Ascending aorta (tissue), 2 donors: ENCODE measurements at regions of chr10 and their contacts with region 1.

Region 1: DNA sequence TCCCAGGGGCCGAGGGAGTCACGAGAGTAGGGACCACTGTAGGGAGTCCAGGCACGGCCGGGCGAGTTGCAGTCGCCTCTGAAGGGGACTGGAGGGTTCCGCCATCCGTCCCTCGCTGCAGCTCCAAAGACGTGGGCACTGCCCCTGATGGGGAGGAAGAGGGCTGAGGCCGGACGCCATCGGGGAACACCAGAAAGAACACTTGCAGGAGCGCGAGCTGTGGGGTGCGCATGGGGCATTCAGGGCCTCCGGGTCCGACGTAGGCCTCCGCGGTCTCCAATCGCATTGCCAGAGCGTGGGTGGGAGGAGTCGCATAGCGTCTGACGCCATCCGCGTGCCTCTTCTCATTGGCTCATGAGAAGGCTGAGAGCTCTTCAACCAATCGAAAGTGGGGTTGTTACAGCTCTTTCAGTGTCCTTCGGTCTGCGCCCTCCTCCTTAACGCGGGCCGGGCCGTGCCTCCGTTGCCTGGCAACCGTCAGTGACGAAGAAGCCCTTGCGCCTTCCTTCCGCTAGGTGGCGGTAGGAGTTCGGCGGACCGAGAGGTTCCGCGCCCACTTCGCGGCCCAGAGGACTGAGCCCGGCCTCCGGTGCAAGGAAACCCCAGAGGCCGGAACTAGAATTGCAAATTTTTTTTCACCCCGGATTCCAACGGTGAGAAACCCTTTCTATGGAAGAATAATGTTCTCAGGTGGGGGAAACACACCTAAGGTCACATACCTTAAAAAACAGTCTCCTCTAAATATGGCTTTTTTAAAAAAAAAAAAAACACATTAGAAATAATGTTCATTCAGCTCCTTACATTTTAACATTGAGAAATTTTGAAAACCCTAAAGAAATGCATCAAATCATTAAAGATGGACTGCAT is at the start of gene TCTN3:
- DNase-seq: peak; percentile 95 to 99
- H3K4me3 ChIP-seq: peak within 1 kb of the TSS; percentile 78 to 93
- H3K27ac ChIP-seq: peak within 1 kb of the TSS; percentile 59 to 84
- H3K4me1 ChIP-seq: peaks cover 5 to 8% of the 10 kb centered on the region in 2 donors
- H3K27me3 ChIP-seq: no peaks in the 10 kb centered on the region
- CTCF ChIP-seq: peak; percentile 97 to 99 (median 98)
- total RNA-seq, gene TCTN3: 22.1 TPM

Region 2: DNA sequence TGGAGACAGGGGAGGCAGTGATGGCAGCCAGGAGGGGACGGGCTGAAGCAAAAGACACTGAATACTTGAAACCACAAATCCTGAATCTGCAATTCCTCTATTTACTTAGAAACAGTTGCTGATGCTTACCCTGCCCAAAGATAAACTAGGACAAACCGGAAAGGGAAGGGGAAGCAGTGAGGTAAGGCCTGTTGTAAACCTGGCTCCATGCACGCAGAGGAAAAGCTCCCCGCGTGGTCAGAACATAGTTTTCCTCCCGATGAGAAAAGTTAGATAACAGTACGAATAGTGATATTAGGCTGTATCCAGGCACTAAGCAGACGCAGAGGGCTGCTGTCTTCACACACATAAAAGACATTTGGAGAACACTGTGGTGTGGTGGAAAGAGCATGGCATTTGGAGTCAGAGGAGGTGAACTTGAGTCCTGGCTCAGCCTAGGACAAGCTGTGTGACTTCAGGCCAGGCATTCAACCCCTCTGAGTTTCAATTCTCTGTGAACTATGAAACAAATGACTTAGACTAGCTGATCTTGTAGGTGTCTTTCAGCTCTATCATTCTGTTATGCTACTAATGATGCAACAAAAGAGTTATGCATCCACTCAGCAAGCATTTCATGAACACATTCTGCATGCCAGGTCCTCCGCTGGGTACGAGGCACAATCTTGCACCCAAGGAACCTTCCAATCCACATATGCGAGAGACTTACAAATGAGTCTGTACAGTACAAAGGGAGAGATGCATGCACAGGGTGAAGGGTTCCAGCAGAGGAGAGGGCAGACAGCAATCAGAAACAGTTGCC is 213.6 kb before region 1 on chr10:
- intact Hi-C with region 1: no loop called
- DNase-seq: no peak
- H3K4me3 ChIP-seq: peak overlapping the region in 1 of 2 donors; percentile 28
- H3K27ac ChIP-seq: peak overlapping the region; percentile 95 to 96
- H3K4me1 ChIP-seq: peaks cover 45 to 88% of the 10 kb centered on the region in 2 donors
- H3K27me3 ChIP-seq: no peaks in the 10 kb centered on the region
- CTCF ChIP-seq: no peak

Region 3: DNA sequence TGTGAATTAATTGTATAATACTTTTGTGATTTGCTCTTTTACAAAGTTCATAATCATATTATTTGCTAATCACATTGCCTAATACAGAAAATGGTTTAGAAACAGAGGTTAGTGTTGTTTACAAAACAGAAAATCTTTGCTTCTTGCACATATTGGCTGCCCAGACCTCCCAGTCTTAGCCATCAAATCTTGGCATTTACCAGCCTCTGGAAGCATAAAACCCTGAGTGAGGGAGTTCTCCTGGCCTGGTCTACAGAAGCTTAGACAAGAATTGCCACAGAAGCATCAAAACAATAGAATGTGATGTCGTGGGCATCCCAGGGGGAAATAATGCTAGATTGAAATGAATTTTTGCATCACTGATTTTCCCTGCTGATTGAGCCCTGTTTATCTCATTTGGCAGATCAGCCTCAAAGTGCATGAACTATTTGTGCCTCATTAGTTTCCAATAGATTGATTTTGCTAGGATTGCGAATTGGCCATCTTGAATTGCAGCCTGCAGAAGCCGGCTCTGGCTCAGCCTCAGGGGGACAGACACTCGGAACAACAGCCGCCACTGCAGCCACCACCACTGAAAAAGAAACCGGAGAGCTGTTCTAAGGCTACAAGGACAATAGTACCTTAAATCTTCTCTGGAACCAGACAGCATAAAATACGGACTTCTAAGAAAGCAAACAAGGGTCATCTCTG is 121.6 kb before region 1 on chr10:
- intact Hi-C with region 1: no loop called
- DNase-seq: no peak
- H3K4me3 ChIP-seq: no peak overlapping the region
- H3K27ac ChIP-seq: no peak overlapping the region
- H3K4me1 ChIP-seq: peaks cover 0 to 10% of the 10 kb centered on the region in 2 donors
- H3K27me3 ChIP-seq: no peaks in the 10 kb centered on the region
- CTCF ChIP-seq: no peak

Region 4: DNA sequence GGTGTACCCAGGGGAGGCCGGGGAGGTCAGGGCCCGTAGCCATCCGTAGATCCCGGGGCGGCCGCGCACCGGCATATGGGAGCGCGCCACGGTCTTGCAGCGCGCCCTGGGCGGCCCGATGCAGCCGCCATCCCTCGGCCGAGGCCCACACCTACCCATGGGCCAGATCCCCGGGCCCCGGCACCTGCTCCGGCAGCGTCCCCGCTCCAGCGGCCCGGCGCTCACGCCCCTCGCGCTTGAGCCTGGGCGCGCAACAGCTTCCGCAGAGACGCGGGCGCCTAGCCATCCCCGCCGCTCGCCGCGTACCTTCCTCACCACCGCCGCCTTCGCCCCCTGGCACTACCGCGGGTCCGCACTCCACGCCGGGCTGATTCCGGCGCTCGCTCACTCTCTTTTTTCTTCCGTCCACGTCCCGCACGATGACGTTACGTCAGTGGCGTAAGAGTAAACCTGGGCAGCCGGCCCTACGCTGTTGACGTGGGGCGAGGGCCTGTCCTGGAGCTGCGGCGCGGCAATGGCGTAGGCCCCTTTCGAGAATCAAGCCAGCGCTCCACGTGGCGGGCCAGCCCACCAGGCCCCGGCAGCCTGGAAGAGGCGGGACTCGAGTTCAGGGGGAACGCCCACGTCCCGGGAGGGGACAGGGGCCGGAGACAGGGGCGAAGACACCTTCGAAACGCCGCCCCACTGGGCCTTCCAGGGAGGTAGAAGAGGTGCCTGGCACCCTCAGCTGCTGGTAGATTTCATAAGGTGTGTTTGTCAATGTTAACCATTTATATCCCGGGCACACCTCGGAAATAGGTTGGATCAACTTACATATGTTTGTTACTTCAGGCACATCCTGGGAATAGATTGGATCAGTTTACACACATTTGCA is 37.4 kb before region 1 on chr10 and contains the start of gene ALDH18A1:
- intact Hi-C with region 1: loop called (anchors 1 kb)
- DNase-seq: peak; percentile 63 to 96
- H3K4me3 ChIP-seq: peak within 1 kb of the TSS; percentile 87 to 89
- H3K27ac ChIP-seq: peak within 1 kb of the TSS; percentile 65 to 68
- H3K4me1 ChIP-seq: peaks cover 0 to 8% of the 10 kb centered on the region in 2 donors
- H3K27me3 ChIP-seq: no peaks in the 10 kb centered on the region
- CTCF ChIP-seq: peak in 1 of 3 experiments; percentile 5
- total RNA-seq, gene ALDH18A1: 29.1 TPM

Region 5: DNA sequence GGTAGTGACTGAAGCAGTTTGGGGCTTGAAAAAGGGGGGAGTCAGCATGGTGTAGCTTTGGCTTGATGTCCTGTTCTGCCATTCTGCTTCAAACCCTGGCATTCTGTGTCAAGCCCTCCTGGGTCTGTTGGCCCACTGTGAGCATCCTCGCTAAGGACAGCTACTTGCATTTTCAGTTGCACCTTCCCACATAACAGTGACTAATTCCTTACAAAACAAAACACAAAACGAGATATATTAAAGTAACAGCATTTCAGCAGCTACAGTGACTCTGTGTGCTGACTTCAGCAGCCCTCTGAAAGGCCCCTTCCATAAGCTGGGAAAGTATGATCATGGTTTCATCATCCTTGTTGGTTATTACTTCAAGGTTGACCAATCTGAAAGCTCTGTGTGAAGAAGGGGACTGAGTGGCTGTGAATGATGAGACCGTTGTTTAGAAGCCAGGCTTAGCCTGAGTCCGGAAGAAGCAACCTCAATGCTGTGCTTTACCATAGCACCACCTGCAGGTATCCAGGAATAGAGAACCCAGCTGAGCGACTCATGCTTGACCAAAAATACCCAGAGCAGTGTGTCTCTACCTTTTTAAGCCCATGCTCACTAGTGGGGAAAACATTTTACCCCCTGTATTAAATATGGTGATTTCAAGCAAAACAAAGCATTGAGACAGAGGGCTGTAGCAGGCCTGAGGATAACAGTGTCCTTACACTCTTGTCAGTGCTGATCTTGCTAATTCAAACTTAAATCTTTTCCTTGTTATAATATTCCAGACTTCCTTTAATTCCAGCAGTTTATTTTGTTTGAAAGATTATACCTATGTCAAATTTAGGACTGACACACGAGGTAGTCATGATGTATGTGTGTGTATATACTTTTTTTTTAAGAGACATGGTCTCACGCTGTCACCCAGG is 171.3 kb after region 1 on chr10:
- intact Hi-C with region 1: loop called (anchors 1 kb)
- DNase-seq: peak in 1 of 2 donors; percentile 68
- H3K4me3 ChIP-seq: no peak overlapping the region
- H3K27ac ChIP-seq: peak overlapping the region in 1 of 2 donors; percentile 1
- H3K4me1 ChIP-seq: no peaks in the 10 kb centered on the region
- H3K27me3 ChIP-seq: no peaks in the 10 kb centered on the region
- CTCF ChIP-seq: peak; percentile 58 to 70 (median 61)

Region 6: DNA sequence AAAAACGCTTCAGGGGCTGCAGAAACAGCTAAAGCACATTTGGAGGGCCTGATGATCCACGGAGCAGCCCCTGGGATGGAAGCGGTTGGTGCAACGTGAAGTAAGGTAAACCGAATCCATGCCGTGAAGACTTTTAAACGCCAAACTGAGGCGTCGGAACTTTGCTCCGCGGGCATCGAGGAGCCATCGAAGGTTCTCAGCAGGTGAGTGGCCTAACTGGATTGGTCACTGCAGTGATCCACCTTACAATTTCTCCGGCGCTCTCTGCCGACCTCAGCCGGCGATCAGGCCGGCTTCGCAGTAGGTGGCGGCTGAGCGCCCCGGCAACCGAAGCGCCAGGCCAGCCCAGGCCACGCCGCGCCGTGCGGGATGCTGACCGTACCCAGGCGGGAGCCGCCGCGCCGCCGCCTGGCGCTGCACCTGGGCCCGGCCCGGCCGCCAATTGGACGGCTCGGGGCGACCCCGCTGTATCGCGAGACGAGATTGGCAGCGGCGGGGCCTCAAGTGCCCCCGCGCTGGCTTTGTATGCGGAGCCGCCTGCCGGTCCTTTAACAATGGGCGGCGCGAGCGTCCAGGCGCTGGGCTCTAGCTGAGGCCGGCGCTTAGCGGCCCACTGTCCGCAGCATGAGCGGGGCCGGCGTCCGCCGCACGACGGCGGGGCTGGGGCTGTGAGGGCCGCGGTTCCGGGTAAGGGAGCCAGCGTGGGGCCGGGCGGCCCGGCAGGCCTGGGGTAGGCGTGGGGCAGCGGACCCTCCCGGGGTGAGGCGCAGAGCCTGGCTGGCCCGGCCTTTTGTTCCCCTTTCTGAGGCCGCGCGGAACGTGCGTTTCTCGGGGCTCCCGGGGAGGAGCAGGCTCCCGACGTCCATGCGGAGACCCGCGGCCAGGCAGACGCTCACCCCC is 349.4 kb after region 1 on chr10 and contains the start of gene CCNJ:
- intact Hi-C with region 1: loop called (anchors 2 kb)
- DNase-seq: peak; percentile 61 to 93
- H3K4me3 ChIP-seq: peak within 1 kb of the TSS; percentile 89 to 93
- H3K27ac ChIP-seq: peak within 1 kb of the TSS; percentile 85 to 87
- H3K4me1 ChIP-seq: peaks cover 2 to 3% of the 10 kb centered on the region in 2 donors
- H3K27me3 ChIP-seq: no peaks in the 10 kb centered on the region
- CTCF ChIP-seq: peak in 2 of 3 experiments; percentile 18 to 19
- total RNA-seq, gene CCNJ: 6.0 TPM

Region 7: GRCh38 chr10:96229568-96230030 is 535.7 kb after region 1 on chr10:
- intact Hi-C with region 1: loop called (anchors 10 kb)
- DNase-seq: peak in 1 of 2 donors; percentile 84
- H3K4me3 ChIP-seq: no peak overlapping the region
- H3K27ac ChIP-seq: no peak overlapping the region
- H3K4me1 ChIP-seq: peaks cover 0 to 3% of the 10 kb centered on the region in 2 donors
- H3K27me3 ChIP-seq: no peaks in the 10 kb centered on the region
- CTCF ChIP-seq: peak; percentile 73 to 92 (median 90)